IMR-90 (cell line): ENCODE measurements at regions of chr11 and their contacts with region 1.

Region 1: DNA sequence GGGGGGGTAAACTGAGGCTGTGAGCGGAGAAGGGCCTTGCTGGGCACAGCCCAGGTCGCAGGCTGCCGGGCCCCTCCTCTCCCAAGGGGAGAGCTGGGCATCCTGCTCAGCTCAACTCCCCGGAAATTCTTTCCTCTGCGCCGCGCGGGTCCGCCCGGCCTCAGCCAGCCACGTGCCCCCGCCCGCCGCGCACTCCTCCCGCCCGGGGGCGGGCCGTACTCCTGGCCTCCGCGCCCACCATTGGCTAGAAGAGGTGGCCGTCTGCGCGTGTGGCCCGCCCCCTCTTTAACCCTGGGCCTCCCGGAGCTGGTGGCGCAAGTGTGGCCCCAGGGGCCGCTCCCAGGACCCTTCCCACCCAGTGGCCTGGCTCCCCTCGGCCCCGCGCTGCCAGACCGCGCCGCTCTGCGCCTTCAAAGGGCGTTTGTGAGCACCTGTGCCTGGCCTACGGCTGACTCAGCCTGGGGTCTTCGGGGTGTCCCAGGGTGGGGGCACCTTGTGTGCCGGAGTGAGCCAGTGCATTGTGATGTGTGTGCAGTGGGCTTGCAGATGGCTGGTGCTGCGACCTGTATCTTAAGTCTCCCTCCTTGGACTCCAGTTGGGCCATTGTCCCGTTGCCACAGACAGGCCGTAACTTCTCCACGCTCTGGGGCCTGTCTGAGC is 2.0 kb downstream of the MRGPRF start:
- DNase-seq: peak; percentile 77
- ATAC-seq: peak; percentile 52
- H3K4me3 ChIP-seq: peak overlapping the region; percentile 68
- H3K27ac ChIP-seq: peak overlapping the region; percentile 99
- H3K4me1 ChIP-seq: peaks cover 51% of the 10 kb centered on the region
- H3K27me3 ChIP-seq: no peaks in the 10 kb centered on the region
- CTCF ChIP-seq: no peak
- POLR2A ChIP-seq: no peak; the same call in 1 of the 2 replicates
- RAD21 ChIP-seq: no peak

Region 2: GRCh38 chr11:68843703-68844312 is 167.3 kb before region 1 on chr11:
- CTCF ChIA-PET with region 1: no interaction called
- POLR2A ChIA-PET with region 1: no interaction called
- dilution Hi-C with region 1: no loop called
- in situ Hi-C with region 1: no loop called
- intact Hi-C with region 1: loop called (anchors 5 kb)
- DNase-seq: no peak
- ATAC-seq: no peak
- H3K4me3 ChIP-seq: no peak overlapping the region
- H3K27ac ChIP-seq: no peak overlapping the region
- H3K4me1 ChIP-seq: peaks cover 11% of the 10 kb centered on the region
- H3K27me3 ChIP-seq: peaks cover 17% of the 10 kb centered on the region
- CTCF ChIP-seq: 0 out of 2 replicates have a peak, but pooled peaks have one; percentile 5
- POLR2A ChIP-seq: no peak
- RAD21 ChIP-seq: no peak

Region 3: DNA sequence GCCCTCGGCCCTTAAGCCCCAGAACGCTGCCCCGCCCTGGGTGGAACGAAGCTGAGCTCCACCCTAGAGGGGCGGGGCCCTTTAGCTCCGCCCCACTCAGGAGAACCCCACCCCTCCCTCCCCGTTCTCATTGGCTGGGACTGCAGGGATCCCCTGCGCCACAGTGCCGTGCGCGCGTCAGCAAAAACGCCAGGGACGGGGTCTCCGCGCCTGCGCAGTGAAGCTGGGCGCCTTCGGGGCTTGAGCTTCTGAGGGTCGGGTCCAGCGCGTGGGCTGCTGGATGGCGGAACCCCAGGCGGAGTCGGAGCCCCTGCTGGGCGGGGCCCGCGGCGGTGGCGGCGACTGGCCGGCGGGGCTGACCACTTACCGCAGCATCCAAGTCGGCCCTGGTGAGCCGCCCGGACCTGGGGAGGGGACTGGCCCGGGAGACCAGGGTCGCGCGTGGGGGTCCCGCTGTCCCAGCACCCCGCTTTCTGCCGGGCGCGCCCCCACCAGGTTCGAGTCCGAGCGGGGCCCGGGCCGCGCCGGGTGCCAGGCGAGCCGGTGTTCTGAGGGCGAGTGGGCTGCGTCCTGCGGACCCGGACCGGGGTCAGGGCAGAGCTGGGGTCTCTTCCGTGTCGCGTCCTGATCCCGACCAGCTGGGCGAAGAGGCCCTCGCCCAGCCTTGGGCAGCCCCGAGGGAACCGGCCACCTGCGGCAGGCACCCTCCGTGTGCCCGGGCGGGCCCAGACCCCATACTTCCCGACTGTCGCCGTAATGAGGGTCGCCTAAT is 37.8 kb after region 1 on chr11 and contains the start of gene TPCN2:
- CTCF ChIA-PET with region 1: interaction called, 11 read pairs
- POLR2A ChIA-PET with region 1: interaction called, 11 read pairs
- dilution Hi-C with region 1: no loop called
- in situ Hi-C with region 1: no loop called
- intact Hi-C with region 1: loop called (anchors 1 kb)
- DNase-seq: peak; percentile 96
- ATAC-seq: peak; percentile 96
- H3K4me3 ChIP-seq: peak within 1 kb of the TSS; percentile 60
- H3K27ac ChIP-seq: peak within 1 kb of the TSS; percentile 53
- H3K4me1 ChIP-seq: peaks cover 13% of the 10 kb centered on the region
- H3K27me3 ChIP-seq: no peaks in the 10 kb centered on the region
- CTCF ChIP-seq: no peak
- POLR2A ChIP-seq: peak; percentile 80
- RAD21 ChIP-seq: no peak
- total RNA-seq, gene TPCN2: 3.1 and 3.4 TPM in 2 replicates

Region 4: DNA sequence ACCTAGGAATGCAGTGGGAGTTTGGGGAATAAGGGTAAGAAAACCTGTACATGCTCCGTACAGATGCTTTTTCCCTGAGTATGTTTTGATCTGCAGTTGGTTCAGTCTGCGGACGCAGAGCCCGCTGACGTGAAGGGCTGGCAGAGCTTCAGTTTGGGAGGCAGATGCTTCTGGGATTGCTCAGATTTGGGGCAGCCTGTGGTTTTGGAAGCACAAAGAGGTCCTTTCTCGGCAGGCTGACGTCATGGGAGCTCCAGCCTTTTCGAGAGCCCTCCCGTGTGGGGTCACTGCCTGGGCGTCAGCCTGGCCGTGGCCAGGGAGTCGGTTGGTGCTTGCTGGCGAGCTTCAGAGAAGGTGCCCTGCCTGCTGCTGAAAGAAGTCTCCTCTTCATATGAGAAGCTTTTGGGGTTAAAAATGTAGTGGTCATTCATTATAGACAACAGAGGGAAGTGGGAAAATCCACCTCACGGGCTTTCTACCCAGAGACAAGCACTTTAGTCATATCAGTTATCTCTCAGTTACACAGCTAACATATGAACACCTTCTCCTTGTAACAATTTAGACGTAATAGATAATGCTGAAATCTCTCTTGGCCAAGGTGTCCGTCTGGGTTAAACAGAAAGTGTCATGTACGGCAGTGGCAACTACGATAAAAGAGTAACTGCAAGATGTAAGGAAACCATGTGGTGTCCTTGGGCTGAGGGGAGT is 64.5 kb after region 1 on chr11:
- CTCF ChIA-PET with region 1: no interaction called
- POLR2A ChIA-PET with region 1: interaction called, 4 read pairs
- dilution Hi-C with region 1: no loop called
- in situ Hi-C with region 1: loop called (anchors 5 kb)
- intact Hi-C with region 1: loop called (anchors 1 kb)
- DNase-seq: peak; percentile 99
- ATAC-seq: peak; percentile 94
- H3K4me3 ChIP-seq: no peak overlapping the region
- H3K27ac ChIP-seq: peak overlapping the region; percentile 15
- H3K4me1 ChIP-seq: peaks cover 21% of the 10 kb centered on the region
- H3K27me3 ChIP-seq: no peaks in the 10 kb centered on the region
- CTCF ChIP-seq: no peak
- POLR2A ChIP-seq: peak; percentile 52
- RAD21 ChIP-seq: no peak

Region 5: DNA sequence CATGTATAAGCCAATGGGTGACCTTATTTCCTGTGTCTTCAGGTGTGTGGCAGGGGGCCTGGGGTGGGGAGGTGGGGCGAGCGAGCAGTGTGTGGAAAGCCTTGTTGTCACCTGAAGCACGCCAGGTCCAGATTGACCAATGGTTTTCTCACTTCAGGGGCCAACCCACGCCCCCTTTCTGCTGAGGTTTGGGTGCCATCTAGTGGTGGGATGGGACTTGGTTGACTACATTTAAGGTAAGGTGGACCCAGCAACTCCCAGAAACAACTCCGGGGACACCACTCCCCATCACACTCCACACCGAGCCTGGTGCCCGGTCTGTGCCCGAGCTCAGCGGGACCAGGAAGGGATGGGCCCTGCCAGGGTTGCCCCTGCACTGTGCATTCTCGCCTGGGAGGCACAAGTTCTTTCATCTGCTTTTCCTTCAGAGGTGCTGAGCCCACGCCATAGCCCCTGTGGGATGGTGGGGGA is 77.6 kb after region 1 on chr11:
- CTCF ChIA-PET with region 1: no interaction called
- POLR2A ChIA-PET with region 1: interaction called, 4 read pairs
- dilution Hi-C with region 1: no loop called
- in situ Hi-C with region 1: loop called (anchors 5 kb)
- intact Hi-C with region 1: loop called (anchors 1 kb)
- DNase-seq: peak; percentile 76
- ATAC-seq: peak; percentile 83
- H3K4me3 ChIP-seq: no peak overlapping the region
- H3K27ac ChIP-seq: no peak overlapping the region
- H3K4me1 ChIP-seq: peaks cover 9% of the 10 kb centered on the region
- H3K27me3 ChIP-seq: no peaks in the 10 kb centered on the region
- CTCF ChIP-seq: peak; percentile 86
- POLR2A ChIP-seq: no peak
- RAD21 ChIP-seq: peak; percentile 91